PC-9 (cell line): ENCODE measurements at regions of chr6 and their contacts with region 1.

Region 1: DNA sequence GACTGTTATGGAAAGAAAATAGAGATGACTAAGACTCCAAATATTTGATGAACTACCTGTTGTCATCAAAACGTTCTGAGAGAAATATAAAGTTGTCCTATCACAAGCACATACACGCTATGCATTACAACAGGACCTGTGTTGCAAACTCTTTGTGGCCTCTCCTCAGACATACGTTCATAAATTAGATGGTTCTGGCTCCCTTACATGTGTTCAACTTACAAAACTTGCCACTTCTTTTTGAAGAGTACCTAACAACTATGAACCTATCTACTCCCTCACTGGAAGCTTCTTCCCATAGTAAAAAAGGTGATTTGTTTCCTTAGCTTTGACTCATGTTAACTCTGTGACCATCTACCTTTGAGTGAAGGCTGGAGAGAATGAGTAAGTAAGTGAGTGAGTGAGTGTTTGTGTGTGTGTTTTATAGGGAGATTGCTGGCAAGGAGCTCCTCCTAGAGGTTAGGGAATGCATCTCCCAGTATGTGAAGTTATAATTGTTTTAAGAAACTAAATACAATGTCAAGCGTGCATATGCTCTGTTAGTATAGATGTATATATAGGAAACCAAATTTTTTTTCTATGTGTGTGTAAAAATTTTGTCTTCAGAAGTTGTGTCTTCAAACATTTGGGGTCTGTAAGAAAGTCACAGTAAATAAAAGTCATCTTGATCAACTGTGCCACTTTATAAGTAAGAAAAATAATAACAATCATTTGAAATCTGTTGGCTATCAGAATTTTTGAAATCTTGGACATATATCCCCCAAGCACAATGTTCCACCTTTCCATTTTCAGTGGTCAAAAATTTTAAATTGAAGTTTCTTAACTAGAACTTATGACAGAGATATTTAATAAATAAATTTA is 1211.1 kb upstream of the GJE1 start:
- DNase-seq: peak in 1 of 2 experiments; percentile 70
- H3K4me3 ChIP-seq: no peak overlapping the region
- H3K27ac ChIP-seq: no peak overlapping the region
- H3K4me1 ChIP-seq: no peaks in the 10 kb centered on the region
- H3K27me3 ChIP-seq: no peaks in the 10 kb centered on the region
- CTCF ChIP-seq: peak; percentile 68

Region 2: DNA sequence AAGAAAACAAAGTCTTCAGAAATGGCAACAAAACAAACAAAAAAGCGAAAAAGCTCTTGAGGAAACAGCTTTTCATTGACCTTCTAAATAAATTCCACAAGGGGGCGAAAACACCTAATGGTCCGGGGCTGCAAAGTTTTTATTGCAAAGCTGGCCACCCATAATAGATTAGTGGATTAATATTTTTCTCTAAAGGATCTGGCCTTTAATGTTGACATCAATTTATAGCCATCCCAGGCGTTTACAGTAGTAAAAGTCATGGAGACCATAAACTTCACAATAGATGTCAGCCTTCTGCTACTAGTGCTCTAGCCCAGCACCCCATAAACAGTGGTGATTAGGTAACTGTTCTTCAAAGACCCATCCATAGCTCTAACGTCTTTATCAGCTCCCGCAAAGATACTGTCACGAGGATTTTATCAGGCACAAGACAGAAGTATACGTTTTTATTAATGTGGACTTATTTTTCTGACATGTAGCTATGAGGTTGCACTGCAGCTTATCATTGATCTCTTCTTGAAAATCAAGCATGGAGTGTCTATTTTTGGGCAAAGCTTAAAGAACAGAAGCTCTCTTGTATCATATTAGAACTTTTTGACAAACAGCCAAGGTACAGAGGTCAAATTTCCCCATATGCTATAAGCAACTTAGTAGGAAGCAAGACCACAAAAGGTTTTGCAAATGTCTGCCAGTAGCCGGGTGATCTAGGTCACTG is 1551.9 kb before region 1 on chr6:
- CTCF ChIA-PET with region 1: no interaction called
- POLR2A ChIA-PET with region 1: no interaction called
- intact Hi-C with region 1: loop called (anchors 2 kb)
- DNase-seq: peak; percentile 9 to 70
- H3K4me3 ChIP-seq: peak overlapping the region; percentile 89; the same call in 1 of the 2 replicates
- H3K27ac ChIP-seq: peak overlapping the region; percentile 28
- H3K4me1 ChIP-seq: peaks cover 36% of the 10 kb centered on the region
- H3K27me3 ChIP-seq: no peaks in the 10 kb centered on the region
- CTCF ChIP-seq: peak; percentile 96

Region 3: GRCh38 chr6:140062043-140063020 is 859.3 kb before region 1 on chr6:
- CTCF ChIA-PET with region 1: no interaction called
- POLR2A ChIA-PET with region 1: no interaction called
- intact Hi-C with region 1: loop called (anchors 5 kb)
- DNase-seq: peak; percentile 51 to 97
- H3K4me3 ChIP-seq: peak overlapping the region; percentile 4; the same call in 1 of the 2 replicates
- H3K27ac ChIP-seq: peak overlapping the region; percentile 66
- H3K4me1 ChIP-seq: peaks cover 32% of the 10 kb centered on the region
- H3K27me3 ChIP-seq: no peaks in the 10 kb centered on the region
- CTCF ChIP-seq: no peak

Region 4: DNA sequence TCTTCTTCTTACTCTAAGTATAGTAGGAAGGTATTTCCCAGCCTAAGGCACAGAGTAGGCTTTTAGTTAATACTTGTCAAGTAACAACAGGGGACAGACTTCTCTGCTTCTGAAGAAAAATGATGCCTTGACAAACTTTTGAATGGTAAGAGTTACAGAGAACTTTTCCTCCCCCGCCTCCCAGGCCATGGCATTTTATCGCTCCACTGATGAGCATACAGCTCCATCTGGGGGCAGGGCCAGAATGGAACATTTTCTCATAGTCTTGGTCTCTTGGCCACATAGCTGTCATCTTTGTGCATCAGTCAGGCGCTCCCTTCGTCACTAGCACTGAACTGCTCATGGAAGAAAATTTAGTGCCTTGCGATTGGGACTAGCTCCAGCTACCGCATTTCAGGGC is 480.3 kb before region 1 on chr6:
- CTCF ChIA-PET with region 1: no interaction called
- POLR2A ChIA-PET with region 1: no interaction called
- intact Hi-C with region 1: loop called (anchors 5 kb)
- DNase-seq: peak in 1 of 2 experiments; percentile 19
- H3K4me3 ChIP-seq: no peak overlapping the region
- H3K27ac ChIP-seq: no peak overlapping the region
- H3K4me1 ChIP-seq: peaks cover under 1% of the 10 kb centered on the region; the same call in 1 of the 2 replicates
- H3K27me3 ChIP-seq: no peaks in the 10 kb centered on the region
- CTCF ChIP-seq: 0 out of 2 replicates have a peak, but pooled peaks have one; percentile 30

Region 5: DNA sequence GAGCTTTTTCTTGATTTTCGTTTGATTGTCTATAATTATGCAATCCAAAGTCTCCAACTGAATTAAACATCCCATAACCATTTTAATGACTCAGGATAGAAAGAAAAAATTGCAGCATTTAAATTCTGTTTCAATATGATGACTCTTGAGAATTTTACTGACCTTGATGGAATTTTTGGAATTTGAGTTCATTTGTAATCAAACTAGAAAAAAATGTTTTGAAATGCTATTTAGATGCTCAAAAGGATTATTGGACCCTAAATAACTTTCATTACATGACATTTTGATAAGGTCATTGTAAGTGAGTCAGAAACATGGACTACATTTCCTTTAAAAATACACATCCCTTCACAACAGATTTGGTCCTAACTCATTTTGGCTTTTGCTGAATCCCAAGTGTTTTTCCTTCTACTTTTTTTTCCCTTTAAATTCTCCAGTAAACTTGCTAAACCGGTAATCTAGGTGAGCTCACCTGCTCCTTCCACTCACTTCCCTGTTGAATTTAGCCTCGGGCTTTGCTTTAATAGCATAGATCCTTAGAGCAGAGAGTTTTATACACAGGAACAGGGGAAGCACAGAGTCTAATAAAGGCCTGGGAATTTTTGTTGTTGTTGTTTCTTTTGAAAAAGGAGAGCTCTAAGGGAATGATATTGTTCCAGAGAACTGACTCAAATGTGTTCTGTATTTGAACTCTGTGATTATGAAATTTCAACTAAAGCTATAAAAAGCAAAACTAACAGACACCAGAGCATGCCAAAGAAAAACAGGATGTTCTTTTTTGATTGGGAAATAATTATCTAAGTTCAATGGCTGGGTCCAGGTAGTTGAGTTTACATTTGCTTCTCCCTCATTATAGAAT is 458.9 kb before region 1 on chr6:
- CTCF ChIA-PET with region 1: no interaction called
- POLR2A ChIA-PET with region 1: no interaction called
- intact Hi-C with region 1: loop called (anchors 1 kb)
- DNase-seq: peak; percentile 40 to 99
- H3K4me3 ChIP-seq: peak overlapping the region; percentile 35; the same call in 1 of the 2 replicates
- H3K27ac ChIP-seq: peak overlapping the region; percentile 91
- H3K4me1 ChIP-seq: peaks cover 39% of the 10 kb centered on the region
- H3K27me3 ChIP-seq: no peaks in the 10 kb centered on the region
- CTCF ChIP-seq: no peak

Region 6: DNA sequence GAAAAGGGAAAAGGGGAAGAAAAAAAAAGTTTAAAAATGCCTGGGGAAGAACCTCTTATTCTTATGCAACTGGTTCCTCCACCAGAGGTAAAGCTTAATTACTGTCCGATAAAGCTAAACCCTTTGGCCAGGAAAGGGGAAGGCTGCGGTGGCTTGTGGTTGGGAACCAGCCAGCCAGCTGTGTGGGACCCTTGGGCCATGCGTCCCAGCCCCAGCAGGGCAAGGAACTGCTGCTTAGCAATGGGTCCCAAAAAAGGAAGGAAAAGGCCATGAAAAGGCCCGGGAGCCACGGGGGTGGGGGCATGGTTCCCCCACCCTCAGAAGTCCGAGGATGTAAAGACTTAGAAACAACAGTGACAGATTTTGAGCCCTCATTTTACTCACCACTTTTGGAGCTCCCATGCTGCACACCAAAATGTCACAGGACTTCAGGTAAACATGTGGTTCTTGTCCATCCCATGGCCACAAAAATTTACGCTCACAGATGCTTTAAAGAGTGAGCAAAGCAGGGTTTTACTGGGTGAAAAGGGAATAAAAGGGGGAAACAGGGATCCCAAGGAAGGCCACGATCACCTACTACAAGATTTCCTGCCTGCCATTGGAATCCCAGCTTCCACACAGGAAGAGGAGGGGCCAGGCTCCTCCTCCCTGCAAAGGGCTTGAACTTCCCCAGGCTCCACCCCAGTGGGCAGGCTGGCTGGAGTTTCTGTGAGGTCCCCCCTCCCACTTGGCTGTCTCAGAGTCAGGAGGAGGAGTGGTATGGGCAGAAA is 23.6 kb before region 1 on chr6:
- CTCF ChIA-PET with region 1: no interaction called
- POLR2A ChIA-PET with region 1: no interaction called
- intact Hi-C with region 1: no loop called
- DNase-seq: peak; percentile 61 to 78
- H3K4me3 ChIP-seq: peak overlapping the region; percentile 71
- H3K27ac ChIP-seq: peak overlapping the region; percentile 57
- H3K4me1 ChIP-seq: peaks cover 9% of the 10 kb centered on the region; the same call in 1 of the 2 replicates
- H3K27me3 ChIP-seq: no peaks in the 10 kb centered on the region
- CTCF ChIP-seq: no peak

Region 7: DNA sequence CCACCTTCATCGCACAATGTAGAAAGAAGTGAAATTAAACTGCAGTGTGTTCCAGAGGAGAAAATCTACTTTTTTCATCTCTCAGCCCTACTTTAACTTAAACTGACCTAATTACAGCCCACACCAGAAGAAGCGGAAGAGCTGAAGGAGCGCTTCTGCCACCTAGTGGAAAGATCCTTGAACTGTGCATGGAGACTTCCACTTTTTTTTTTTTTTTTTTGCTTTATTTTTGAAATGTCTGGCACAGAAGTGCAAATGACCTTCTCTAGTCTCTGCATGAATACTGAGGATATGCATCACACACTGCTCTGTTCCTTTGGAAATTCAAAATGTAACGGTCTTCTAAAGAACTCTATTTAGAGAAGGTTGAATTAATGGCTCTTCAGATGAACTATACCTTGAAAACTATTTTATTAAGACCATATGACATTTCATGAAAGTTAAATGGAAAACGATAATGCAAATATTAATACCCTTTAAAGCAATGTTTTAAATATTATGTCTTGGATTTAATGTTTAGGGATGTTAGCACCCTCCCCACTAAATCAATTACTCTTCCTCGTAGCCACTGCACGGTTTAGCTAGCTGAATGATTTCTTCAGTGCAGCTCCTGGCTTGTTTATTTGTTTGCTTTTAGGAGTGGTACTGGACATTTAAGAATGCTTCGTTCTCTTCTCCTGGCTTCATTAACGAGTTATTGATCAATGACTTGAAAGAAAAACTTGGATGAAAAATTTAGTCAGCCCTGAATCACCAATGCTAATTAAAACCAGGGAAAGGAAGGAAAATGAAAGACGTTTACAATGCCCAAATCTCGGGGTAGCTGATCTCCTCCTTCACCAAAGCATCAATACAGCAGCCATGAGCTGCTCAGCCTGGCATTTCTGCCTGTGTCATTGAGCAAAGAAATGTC is 641.5 kb after region 1 on chr6:
- CTCF ChIA-PET with region 1: no interaction called
- POLR2A ChIA-PET with region 1: no interaction called
- intact Hi-C with region 1: loop called (anchors 5 kb)
- DNase-seq: peak; percentile 46 to 52
- H3K4me3 ChIP-seq: no peak overlapping the region
- H3K27ac ChIP-seq: no peak overlapping the region
- H3K4me1 ChIP-seq: peaks cover 4% of the 10 kb centered on the region; the same call in 1 of the 2 replicates
- H3K27me3 ChIP-seq: no peaks in the 10 kb centered on the region
- CTCF ChIP-seq: peak; percentile 91